CD8-positive, alpha-beta T cell (primary cell): ENCODE measurements at regions of chr9 and their contacts with region 1.

Region 1: DNA sequence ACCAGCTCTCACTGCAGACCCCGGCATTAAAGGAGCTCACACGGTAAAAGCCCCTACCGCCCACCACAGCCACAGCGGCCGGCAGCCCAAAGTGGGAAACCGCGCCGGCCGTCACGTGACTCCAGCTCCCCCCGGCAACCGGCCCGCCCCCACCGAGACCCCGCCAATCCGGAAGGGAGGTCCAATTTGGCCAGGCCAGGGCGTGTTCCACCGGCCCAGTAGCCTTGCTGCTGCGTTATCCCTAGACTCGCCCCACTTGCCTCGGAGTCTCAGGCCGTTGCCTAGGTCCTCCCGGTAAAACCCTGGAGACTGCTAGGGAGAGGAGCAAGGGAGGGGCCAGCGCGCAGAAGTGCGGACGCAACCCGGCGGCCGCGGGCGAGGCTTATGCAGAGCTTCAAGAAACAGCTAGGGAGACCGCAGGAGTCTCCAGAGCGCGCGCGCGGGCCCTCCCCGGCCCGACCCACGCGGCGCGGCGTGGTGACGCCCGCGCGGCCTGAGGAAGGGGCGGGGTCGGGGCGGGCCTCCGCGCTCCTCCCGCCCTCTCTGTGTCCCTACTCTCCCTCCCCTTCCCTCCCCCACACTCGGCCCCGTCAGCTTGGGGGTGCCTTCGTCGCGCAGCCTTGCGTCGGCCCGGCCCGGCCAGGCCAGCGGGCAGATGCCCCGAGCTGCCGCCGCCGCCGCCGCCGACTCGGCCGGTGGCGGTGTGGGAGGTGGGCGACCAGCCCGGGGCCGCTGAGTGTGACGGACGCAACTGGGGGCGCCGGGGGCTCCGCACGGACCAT is at the start of gene RIC1:
- DNase-seq: peak; percentile 74 to 96 (median 87)
- ATAC-seq: peak; percentile 81
- H3K4me3 ChIP-seq: peak within 1 kb of the TSS; percentile 73 to 95
- H3K4me3 Mint-ChIP-seq: peak within 1 kb of the TSS; percentile 98
- H3K27ac ChIP-seq: peak within 1 kb of the TSS; percentile 84 to 88
- H3K27ac Mint-ChIP-seq: peak within 1 kb of the TSS; percentile 99
- H3K4me1 ChIP-seq: peaks cover 53% of the 10 kb centered on the region
- H3K4me1 Mint-ChIP-seq: peaks cover 63% of the 10 kb centered on the region
- H3K27me3 ChIP-seq: no peaks in the 10 kb centered on the region
- H3K27me3 Mint-ChIP-seq: no peaks in the 10 kb centered on the region
- CTCF ChIP-seq: no peak
- total RNA-seq, gene RIC1: 17.0 to 17.4 TPM

Region 2: DNA sequence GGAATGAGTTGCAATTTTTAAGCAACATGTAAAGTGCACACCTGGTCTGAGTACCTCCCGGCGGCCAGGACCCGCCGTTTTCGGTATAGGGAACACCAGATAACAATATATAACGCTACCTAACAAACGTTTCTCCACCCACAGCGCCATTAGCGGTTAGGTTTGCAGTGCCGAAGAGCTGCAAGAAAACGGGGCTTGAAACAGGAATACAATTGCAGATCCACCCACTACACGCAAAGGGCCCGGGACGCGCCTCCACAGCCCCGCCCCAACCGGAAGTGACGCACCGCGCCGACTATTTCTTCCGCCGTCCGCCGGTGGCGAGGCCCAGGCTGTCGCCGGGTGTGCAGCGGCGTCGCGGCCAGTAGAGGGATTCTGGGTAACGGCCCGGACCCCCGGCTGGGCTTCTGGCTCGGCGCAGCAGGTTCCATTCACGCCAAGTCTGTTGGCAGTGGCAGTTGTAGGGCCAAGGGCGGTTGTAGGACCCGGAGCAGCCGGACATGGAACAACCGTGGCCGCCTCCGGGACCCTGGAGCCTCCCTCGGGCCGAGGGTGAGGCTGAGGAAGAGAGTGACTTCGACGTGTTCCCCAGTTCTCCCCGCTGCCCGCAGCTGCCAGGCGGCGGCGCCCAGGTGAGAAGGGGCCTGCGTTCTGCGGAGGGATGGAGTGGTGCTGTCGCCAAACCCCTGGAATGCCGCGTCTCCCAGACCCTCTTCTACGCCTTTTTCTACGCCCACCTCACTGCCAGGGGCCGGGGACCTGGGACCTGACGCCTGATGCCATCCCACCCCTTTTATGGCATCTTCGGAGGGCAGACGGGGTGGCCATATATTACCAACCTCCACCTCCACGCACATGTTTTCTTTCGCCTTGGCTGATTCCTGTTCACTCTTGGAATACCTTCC is 949.2 kb before region 1 on chr9 and contains the start of gene CDC37L1:
- CTCF ChIA-PET with region 1: no interaction called
- POLR2A ChIA-PET with region 1: interaction called, 3 read pairs
- intact Hi-C with region 1: loop called in 1 of 2 experiments (anchors 5 kb)
- DNase-seq: peak; percentile 98 to 100 (median 99)
- ATAC-seq: peak; percentile 86
- H3K4me3 ChIP-seq: peak within 1 kb of the TSS; percentile 70 to 94
- H3K4me3 Mint-ChIP-seq: no peak within 1 kb of the TSS
- H3K27ac ChIP-seq: peak within 1 kb of the TSS; percentile 92 to 96
- H3K27ac Mint-ChIP-seq: no peak within 1 kb of the TSS
- H3K4me1 ChIP-seq: peaks cover 20% of the 10 kb centered on the region
- H3K4me1 Mint-ChIP-seq: peaks cover 12% of the 10 kb centered on the region
- H3K27me3 ChIP-seq: no peaks in the 10 kb centered on the region
- H3K27me3 Mint-ChIP-seq: no peaks in the 10 kb centered on the region
- CTCF ChIP-seq: peak; percentile 87
- total RNA-seq, gene CDC37L1: 35.1 to 36.1 TPM

Region 3: GRCh38 chr9:5450359-5451091 is 178.2 kb before region 1 on chr9 and contains the start of gene CD274:
- CTCF ChIA-PET with region 1: interaction called, 4 read pairs
- POLR2A ChIA-PET with region 1: interaction called, 17 read pairs
- intact Hi-C with region 1: no loop called
- DNase-seq: peak; percentile 53 to 92 (median 74)
- ATAC-seq: peak; percentile 93
- H3K4me3 ChIP-seq: peak within 1 kb of the TSS; percentile 60 to 91
- H3K4me3 Mint-ChIP-seq: peak within 1 kb of the TSS; percentile 88
- H3K27ac ChIP-seq: peak within 1 kb of the TSS; percentile 94 to 96
- H3K27ac Mint-ChIP-seq: peak within 1 kb of the TSS; percentile 95
- H3K4me1 ChIP-seq: peaks cover 17% of the 10 kb centered on the region
- H3K4me1 Mint-ChIP-seq: peaks cover 51% of the 10 kb centered on the region
- H3K27me3 ChIP-seq: no peaks in the 10 kb centered on the region
- H3K27me3 Mint-ChIP-seq: no peaks in the 10 kb centered on the region
- CTCF ChIP-seq: peak; percentile 55
- total RNA-seq, gene CD274: 3.4 to 3.7 TPM

Region 4: DNA sequence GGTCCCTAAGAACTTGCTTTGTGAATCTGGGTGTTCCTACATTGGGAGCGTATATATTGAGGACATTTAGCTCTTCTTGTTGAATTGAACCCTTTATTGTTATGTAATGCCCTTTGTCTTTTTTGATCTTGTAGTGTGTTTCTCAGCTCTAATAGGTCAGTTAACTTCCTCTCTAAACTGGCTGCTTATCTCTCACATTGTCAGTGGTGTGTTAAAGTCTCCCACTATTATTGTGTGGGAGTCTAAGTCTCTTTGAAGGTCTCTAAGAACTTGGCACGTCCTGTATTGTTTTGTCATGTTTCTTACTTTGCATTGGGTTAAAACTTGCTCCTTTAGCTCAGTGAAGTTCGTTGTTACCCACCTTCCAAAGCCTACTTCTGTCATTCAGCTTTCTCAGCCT is 36.3 kb after region 1 on chr9:
- CTCF ChIA-PET with region 1: no interaction called
- POLR2A ChIA-PET with region 1: no interaction called
- intact Hi-C with region 1: loop called in 1 of 2 experiments (anchors 5 kb)
- DNase-seq: no peak
- ATAC-seq: no peak
- H3K4me3 ChIP-seq: no peak overlapping the region
- H3K4me3 Mint-ChIP-seq: no peak overlapping the region
- H3K27ac ChIP-seq: no peak overlapping the region
- H3K27ac Mint-ChIP-seq: peak overlapping the region; percentile 63
- H3K4me1 ChIP-seq: peaks cover 14% of the 10 kb centered on the region
- H3K4me1 Mint-ChIP-seq: peaks cover 58% of the 10 kb centered on the region
- H3K27me3 ChIP-seq: no peaks in the 10 kb centered on the region
- H3K27me3 Mint-ChIP-seq: no peaks in the 10 kb centered on the region
- CTCF ChIP-seq: no peak

Region 5: GRCh38 chr9:5843794-5844504 is 215.2 kb after region 1 on chr9:
- CTCF ChIA-PET with region 1: no interaction called
- POLR2A ChIA-PET with region 1: interaction called, 5 read pairs
- intact Hi-C with region 1: loop called in 1 of 2 experiments (anchors 5 kb)
- DNase-seq: peak in 1 of 9 experiments; percentile 35
- ATAC-seq: no peak
- H3K4me3 ChIP-seq: peak overlapping the region in 1 of 2 experiments; percentile 24
- H3K4me3 Mint-ChIP-seq: peak overlapping the region; percentile 65
- H3K27ac ChIP-seq: peak overlapping the region in 1 of 2 experiments; percentile 61
- H3K27ac Mint-ChIP-seq: peak overlapping the region; percentile 84
- H3K4me1 ChIP-seq: peaks cover 53% of the 10 kb centered on the region
- H3K4me1 Mint-ChIP-seq: peaks cover 63% of the 10 kb centered on the region
- H3K27me3 ChIP-seq: no peaks in the 10 kb centered on the region
- H3K27me3 Mint-ChIP-seq: no peaks in the 10 kb centered on the region
- CTCF ChIP-seq: no peak

Region 6: DNA sequence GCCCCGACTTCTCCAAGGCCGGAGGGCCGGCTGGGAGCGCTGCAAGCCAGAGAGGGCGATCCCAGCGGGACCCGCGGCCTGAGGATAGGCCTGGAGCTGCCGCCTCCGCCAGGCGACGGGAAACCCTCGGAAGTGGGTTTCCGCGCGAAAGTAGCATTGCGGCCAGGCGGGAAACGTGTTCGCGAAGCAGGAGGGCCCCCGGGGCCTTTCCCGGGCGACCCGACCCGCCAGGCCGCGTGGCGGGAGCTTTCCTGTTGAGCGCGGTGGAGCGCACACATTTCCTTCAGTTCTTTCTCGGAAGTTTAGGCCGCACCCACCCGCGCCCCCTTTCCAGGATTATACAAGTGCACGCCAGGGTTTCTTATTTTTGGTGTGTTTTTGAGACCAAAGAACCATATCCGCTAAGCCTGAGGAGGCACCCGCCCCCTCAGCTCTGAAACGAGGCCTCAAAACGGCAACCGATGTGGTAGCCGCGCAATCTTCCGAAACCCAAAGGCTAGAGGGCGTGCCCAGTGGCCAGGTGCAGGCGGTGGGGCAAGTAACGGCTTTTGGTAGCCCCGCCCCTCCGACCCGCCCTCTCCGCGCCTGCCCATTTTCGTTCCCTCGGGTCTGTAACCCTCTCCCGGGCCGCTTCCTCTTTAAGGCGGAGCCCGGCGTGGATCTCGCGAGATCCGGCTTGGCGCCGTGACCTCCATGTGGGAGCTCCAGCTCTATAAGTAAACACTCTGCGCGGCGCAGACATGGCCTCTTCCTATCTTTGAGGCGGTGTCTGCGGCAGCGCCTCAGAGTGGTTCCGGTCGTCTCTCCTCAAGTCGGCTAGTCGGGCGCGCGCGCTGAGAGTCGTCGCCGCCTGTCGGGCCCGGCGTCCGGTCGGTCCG is 784.0 kb after region 1 on chr9 and contains the start of gene UHRF2:
- CTCF ChIA-PET with region 1: no interaction called
- POLR2A ChIA-PET with region 1: interaction called, 7 read pairs
- intact Hi-C with region 1: loop called in 1 of 2 experiments (anchors 5 kb)
- DNase-seq: peak; percentile 98 to 99 (median 99)
- ATAC-seq: peak; percentile 88
- H3K4me3 ChIP-seq: peak within 1 kb of the TSS; percentile 58 to 74
- H3K4me3 Mint-ChIP-seq: peak within 1 kb of the TSS; percentile 87
- H3K27ac ChIP-seq: peak within 1 kb of the TSS; percentile 80 to 83
- H3K27ac Mint-ChIP-seq: peak within 1 kb of the TSS; percentile 93
- H3K4me1 ChIP-seq: peaks cover 28% of the 10 kb centered on the region
- H3K4me1 Mint-ChIP-seq: peaks cover 34% of the 10 kb centered on the region
- H3K27me3 ChIP-seq: no peaks in the 10 kb centered on the region
- H3K27me3 Mint-ChIP-seq: no peaks in the 10 kb centered on the region
- CTCF ChIP-seq: no peak
- total RNA-seq, gene UHRF2: 140 to 159 TPM